Aorta (tissue), 5 donors: ENCODE measurements at regions of chr14 and their contacts with region 1.

Region 1: DNA sequence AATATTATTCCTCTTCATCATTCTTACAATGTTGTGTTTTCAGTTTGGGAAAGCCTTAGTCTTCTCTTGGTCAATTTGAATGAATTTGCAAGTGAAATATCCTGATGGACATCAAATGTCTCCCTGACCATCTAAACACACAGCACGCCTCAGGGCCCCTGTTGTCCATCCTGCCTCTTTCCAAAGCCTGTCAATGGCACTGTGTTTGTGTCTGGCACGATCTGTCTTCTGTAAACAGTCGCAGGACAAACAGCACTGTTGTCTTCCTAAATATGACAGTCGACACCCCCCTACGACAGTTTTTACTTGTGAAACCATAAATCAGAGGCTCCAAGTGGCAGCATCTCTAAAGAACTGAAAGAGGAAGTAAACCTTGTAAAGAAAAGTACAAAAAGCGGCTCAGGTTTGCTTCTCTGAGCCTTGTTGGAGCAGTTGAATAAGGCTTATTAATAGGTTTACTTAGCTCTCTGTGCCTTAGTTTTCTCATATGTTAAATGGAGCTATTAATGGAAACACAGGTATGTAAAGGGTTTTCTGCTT is 285.8 kb downstream of the NRXN3 start:
- DNase-seq: no peak
- ATAC-seq: no peak
- H3K4me3 ChIP-seq: no peak overlapping the region
- H3K27ac ChIP-seq: no peak overlapping the region
- H3K4me1 ChIP-seq: no peaks in the 10 kb centered on the region
- H3K27me3 ChIP-seq: no peaks in the 10 kb centered on the region

Region 2: GRCh38 chr14:78566026-78566858 is 110.3 kb after region 1 on chr14:
- intact Hi-C with region 1: loop called in 1 of 2 experiments (anchors 10 kb)
- DNase-seq: peak; percentile 82 to 88
- ATAC-seq: peak; percentile 91
- H3K4me3 ChIP-seq: peak overlapping the region; percentile 8 to 39
- H3K27ac ChIP-seq: no peak overlapping the region
- H3K4me1 ChIP-seq: no peaks in the 10 kb centered on the region
- H3K27me3 ChIP-seq: no peaks in the 10 kb centered on the region